IMR-90 (cell line): ENCODE measurements at regions of chr2 and their contacts with region 1.

Region 1: DNA sequence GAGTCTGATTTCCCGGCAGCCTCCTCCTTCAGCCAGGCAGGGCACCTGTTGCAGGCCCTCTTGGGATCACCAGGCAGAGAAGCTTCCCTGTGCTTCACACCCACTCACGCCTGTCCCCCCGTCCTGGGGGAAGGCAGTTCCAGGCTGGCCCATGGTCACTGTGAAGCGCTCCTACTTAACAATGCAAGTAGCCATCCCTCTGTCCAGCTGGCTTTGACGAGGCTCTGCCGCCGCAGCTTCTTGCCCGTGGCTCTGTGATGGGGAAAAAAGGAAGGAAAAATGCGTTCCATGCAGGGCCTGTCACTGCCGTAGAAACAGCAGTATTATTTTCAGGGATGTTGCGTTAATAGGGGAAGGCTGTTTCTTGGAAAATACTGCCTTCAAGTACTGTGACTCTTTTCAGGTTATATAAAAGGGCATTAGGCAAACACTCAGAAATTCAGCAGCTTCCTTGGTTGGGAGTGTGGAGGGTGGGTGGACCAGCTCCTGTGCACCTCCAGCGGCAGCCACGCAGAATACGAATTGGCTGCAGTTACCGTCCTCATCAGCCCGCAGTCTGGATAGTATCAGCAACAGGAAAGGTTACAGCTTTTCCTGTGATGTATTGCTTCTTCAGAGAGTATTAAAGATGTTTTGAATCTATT is 232.3 kb downstream of the KLHL29 start:
- DNase-seq: peak; percentile 64
- ATAC-seq: peak; percentile 76
- H3K4me3 ChIP-seq: no peak overlapping the region
- H3K27ac ChIP-seq: no peak overlapping the region
- H3K4me1 ChIP-seq: peaks cover 11% of the 10 kb centered on the region; the same call in 1 of the 2 replicates
- H3K27me3 ChIP-seq: no peaks in the 10 kb centered on the region
- CTCF ChIP-seq: peak; percentile 58
- POLR2A ChIP-seq: no peak
- RAD21 ChIP-seq: peak; percentile 60

Region 2: DNA sequence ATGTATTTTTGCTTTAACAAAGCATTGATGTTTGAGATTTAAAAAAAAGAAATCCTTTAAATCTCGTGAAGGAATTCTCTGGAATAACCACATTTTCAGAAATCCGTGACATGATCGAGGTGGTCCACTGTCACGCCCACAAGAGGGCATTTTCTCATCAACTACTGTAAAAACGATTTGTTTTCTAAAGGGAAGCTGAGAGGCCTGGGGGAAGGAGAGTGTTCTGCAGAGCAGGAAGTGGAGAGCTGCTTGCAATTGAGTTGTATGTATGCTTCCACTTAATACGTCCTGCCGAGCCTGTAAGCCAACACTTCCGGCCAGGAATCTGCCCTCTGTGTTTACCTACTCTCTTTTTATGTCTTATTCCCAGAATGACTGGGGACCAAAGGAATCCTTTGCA is 212.9 kb before region 1 on chr2:
- CTCF ChIA-PET with region 1: no interaction called
- POLR2A ChIA-PET with region 1: no interaction called
- dilution Hi-C with region 1: no loop called
- in situ Hi-C with region 1: no loop called
- intact Hi-C with region 1: loop called (anchors 5 kb)
- DNase-seq: peak; percentile 91
- ATAC-seq: peak; percentile 88
- H3K4me3 ChIP-seq: no peak overlapping the region
- H3K27ac ChIP-seq: peak overlapping the region; percentile 70; the same call in 1 of the 2 replicates
- H3K4me1 ChIP-seq: peaks cover 6% of the 10 kb centered on the region
- H3K27me3 ChIP-seq: no peaks in the 10 kb centered on the region
- CTCF ChIP-seq: peak; percentile 42
- POLR2A ChIP-seq: no peak
- RAD21 ChIP-seq: peak; percentile 40; the same call in 1 of the 2 replicates

Region 3: GRCh38 chr2:23584054-23584745 is 33.1 kb before region 1 on chr2:
- CTCF ChIA-PET with region 1: no interaction called
- POLR2A ChIA-PET with region 1: no interaction called
- dilution Hi-C with region 1: no loop called
- in situ Hi-C with region 1: no loop called
- intact Hi-C with region 1: no loop called
- DNase-seq: no peak
- ATAC-seq: no peak
- H3K4me3 ChIP-seq: no peak overlapping the region
- H3K27ac ChIP-seq: no peak overlapping the region
- H3K4me1 ChIP-seq: no peaks in the 10 kb centered on the region
- H3K27me3 ChIP-seq: no peaks in the 10 kb centered on the region
- CTCF ChIP-seq: no peak
- POLR2A ChIP-seq: no peak
- RAD21 ChIP-seq: no peak